Kidney (tissue), 22 donors: ENCODE measurements at regions of chr1 and their contacts with region 1.

Region 1: GRCh38 chr1:15430787-15431570 is 7.3 kb upstream of the CTRC start:
- DNase-seq: peak in 4 of 5 donors; percentile 62 to 83 (median 73)
- H3K4me3 ChIP-seq: no peak overlapping the region
- H3K27ac ChIP-seq: no peak overlapping the region
- H3K4me1 ChIP-seq: no peaks in the 10 kb centered on the region
- H3K27me3 ChIP-seq: no peaks in the 10 kb centered on the region
- CTCF ChIP-seq: peak; percentile 96

Region 2: DNA sequence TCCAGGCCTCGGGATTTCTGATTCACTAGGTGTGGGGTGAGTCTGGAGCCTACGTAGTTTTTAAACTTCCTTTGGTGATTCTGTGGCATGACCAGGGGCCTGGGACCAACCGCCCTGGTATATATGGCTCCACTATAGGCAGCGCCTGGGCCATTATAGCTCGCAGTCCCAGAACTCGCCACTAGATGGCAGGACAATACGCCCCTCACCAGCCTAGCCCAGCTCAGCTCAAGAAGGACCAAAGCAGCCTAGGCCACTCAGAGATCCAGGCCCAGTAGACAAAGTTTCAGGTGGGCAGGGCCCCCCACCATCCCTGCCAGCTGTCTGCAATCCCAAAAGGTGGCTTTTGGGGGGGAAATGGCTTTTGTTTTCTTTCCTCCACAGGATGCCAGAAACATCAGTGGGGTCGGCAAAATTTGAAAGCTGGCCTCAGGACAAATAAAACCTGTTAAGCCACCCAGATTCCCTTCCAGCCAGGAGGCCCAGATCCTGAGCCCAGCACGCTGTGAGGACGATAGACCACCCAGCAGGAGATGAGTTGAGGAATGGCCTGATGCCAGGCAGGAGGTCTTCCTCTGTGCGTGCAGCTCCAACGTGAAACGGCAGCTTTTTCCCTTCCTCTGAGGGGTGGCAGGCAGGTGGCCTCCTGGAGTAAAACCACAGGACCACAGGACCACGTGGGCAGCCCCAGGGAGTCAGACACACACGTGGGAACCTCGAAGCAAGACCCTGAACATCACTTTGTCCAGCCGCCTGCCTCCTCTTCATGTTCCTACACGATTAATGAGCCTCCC is 302.3 kb before region 1 on chr1:
- intact Hi-C with region 1: loop called (anchors 10 kb)
- DNase-seq: peak; percentile 75 to 88 (median 84)
- H3K4me3 ChIP-seq: no peak overlapping the region
- H3K27ac ChIP-seq: no peak overlapping the region
- H3K4me1 ChIP-seq: peaks cover 0 to 6% (median 0%) of the 10 kb centered on the region in 3 donors
- H3K27me3 ChIP-seq: no peaks in the 10 kb centered on the region
- CTCF ChIP-seq: peak; percentile 92

Region 3: GRCh38 chr1:15323351-15323988 is 107.5 kb before region 1 on chr1:
- intact Hi-C with region 1: loop called (anchors 5 kb)
- DNase-seq: peak; percentile 77 to 88 (median 84)
- H3K4me3 ChIP-seq: no peak overlapping the region
- H3K27ac ChIP-seq: no peak overlapping the region
- H3K4me1 ChIP-seq: peaks cover 0 to 4% (median 0%) of the 10 kb centered on the region in 3 donors
- H3K27me3 ChIP-seq: no peaks in the 10 kb centered on the region
- CTCF ChIP-seq: peak; percentile 99